ENCODE measurements at regions of chr2 and their contacts with region 1.

Region 1: GRCh38 chr2:38892819-38893218 is 3.1 kb downstream of the ARHGEF33 start:
- DNase-seq: peak in 1 of 2 experiments; percentile 40
- H3K4me3 ChIP-seq: no peak overlapping the region
- H3K27ac ChIP-seq: no peak overlapping the region
- H3K4me1 ChIP-seq: no peaks in the 10 kb centered on the region
- H3K27me3 ChIP-seq: no peaks in the 10 kb centered on the region
- CTCF ChIP-seq: no peak

Region 2: GRCh38 chr2:38797276-38797675 is 95.5 kb before region 1 on chr2:
- CTCF ChIA-PET with region 1: no interaction called
- POLR2A ChIA-PET with region 1: no interaction called
- intact Hi-C with region 1: no loop called
- DNase-seq: no peak
- H3K4me3 ChIP-seq: no peak overlapping the region
- H3K27ac ChIP-seq: no peak overlapping the region
- H3K4me1 ChIP-seq: no peaks in the 10 kb centered on the region
- H3K27me3 ChIP-seq: no peaks in the 10 kb centered on the region
- CTCF ChIP-seq: no peak

Region 3: DNA sequence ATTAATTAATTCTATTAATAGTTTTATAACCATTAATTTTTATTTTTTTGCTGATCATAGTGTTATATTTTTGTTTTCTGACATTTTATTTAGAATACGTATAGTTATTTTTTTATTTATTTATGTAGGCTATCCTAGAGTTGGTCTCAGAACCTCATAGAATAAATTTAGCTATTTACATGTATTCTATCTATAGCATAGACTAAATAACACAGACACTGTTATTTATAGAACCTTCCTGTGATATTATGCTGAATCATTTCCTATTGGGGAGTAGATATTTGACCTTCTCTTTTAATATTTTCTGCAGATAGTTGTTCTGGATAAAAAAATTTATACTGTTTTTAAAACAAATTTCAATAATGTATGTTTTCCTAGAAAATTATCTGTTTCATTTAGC is 17.1 kb after region 1 on chr2:
- CTCF ChIA-PET with region 1: no interaction called
- POLR2A ChIA-PET with region 1: interaction called, 20 read pairs
- intact Hi-C with region 1: no loop called
- DNase-seq: no peak
- H3K4me3 ChIP-seq: no peak overlapping the region
- H3K27ac ChIP-seq: no peak overlapping the region
- H3K4me1 ChIP-seq: 0 out of 2 replicates have a peak, but pooled peaks cover 4% of the 10 kb centered on the region
- H3K27me3 ChIP-seq: no peaks in the 10 kb centered on the region
- CTCF ChIP-seq: no peak